ENCODE measurements at regions of chr7 and their contacts with region 1.

Region 1: DNA sequence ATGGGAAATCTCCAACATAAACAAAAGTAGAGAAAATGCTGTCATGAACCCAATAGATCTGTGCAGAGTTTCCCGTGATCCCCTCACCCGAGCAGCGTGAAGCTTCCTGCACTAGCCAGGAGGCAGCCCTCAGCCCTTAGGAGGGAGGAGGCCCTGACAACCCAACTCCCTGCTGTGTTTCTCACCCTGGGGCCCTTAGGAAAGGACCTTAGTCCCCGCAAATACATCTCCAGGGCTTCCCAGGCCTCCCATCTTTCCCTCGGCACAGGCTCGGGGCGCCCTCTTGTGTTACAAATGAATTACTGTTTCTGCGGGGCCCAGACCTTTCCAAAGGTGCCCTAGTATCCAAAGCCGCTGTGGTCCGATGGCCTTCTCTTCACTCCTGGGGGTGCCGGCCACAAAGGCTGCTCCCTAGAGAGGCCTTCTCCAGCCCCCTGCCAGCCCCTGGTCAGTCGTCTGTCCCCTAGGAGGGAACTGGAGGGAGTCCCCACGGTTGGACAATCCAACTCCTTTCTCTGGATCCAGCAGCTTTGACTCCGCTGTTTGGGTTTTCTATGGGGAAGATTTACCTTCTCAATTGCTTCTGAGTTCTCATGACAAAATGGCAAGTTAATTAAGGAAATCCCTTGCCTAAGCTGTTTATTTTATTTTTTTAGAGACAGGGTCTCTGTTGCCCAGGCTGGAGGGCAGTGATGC is 49.9 kb upstream of the SH2B2 start:
- DNase-seq: peak in 1 of 2 donors; percentile 45
- H3K4me3 ChIP-seq: no peak overlapping the region
- CTCF ChIP-seq: peak in 1 of 3 donors; percentile 61
- POLR2A ChIP-seq: no peak

Region 2: GRCh38 chr7:101688183-101688831 is 548.4 kb before region 1 on chr7:
- intact Hi-C with region 1: loop called (anchors 5 kb)
- DNase-seq: peak; percentile 44 to 95
- H3K4me3 ChIP-seq: no peak overlapping the region
- CTCF ChIP-seq: peak in 1 of 3 donors; percentile 45
- POLR2A ChIP-seq: no peak

Region 3: DNA sequence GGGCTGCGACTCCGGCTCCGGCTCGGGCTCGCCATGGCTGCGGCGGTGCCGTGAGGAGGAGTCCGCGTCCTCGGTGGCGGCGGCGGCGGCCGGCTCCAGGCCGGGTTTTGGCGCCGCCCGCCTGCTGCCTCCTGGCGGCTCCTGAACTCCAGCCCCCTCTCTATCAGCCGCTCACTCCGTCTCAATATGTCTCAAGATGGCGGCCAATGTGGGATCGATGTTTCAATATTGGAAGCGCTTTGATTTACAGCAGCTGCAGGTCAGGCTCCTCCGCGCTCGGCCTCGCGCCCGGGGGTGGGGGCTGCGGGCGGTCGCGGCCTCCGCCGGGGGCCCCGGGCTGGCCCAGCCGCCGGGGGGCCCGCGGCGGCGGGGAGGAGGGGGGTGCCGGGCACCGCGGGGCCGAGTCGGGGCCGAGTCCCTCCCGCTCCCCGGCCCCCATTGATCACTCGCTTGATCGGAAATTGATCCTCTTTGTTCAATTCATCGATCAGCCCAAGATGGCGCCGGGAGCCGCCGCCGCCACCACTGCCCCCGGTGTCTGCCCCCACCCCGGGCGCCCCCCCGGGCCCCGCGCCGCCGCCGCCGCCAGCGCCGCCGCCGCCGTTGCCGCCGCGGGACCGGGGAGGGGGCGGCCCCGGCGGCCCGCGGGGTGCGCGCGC is 420.8 kb before region 1 on chr7:
- intact Hi-C with region 1: loop called (anchors 10 kb)
- DNase-seq: peak; percentile 61 to 91
- H3K4me3 ChIP-seq: peak overlapping the region; percentile 30
- CTCF ChIP-seq: no peak
- POLR2A ChIP-seq: no peak

Region 4: DNA sequence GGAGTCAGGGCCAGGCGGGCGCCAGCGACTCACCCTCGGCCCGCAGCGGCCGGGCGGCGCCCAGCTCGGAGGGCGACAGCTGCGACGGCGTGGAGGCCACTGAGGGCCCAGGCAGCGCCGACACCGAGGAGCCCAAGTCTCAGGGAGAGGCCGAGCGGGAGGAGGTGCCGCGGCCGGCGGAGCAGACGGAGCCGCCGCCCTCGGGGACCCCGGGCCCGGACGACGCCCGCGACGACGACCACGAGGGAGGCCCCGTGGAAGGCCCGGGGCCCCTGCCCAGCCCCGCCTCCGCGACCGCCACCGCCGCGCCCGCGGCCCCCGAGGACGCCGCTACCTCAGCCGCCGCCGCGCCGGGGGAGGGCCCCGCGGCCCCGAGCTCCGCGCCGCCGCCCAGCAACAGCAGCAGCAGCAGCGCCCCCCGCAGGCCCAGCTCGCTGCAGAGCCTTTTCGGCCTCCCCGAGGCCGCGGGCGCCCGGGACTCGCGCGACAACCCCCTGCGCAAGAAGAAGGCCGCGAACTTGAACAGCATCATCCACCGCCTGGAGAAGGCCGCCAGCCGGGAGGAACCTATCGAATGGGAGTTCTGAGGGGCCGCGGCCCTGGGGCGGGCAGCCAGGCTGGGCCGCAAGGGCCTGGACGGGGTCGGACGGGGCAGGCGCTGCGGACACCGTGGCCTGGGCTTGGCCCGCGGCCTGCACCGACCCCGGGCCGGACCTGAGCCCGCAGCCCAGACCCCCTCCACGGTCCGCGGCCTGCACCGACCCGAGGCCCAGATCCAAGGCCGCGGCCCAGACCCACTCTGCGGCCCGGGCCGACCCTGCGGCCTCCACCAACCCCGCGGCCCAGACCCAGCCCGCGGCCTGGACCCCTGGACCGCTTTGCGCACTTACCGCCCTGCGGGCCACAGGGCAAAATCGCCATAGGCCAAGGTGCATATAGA is 12.0 kb after region 1 on chr7:
- intact Hi-C with region 1: no loop called
- DNase-seq: no peak
- H3K4me3 ChIP-seq: no peak overlapping the region
- CTCF ChIP-seq: no peak
- POLR2A ChIP-seq: no peak

Measured in lower leg skin (tissue), 4 donors.